ENCODE measurements at regions of chr1 and their contacts with region 1.

Region 1: GRCh38 chr1:17831619-17832018 is 76.5 kb downstream of the ACTL8 start:
- DNase-seq: peak in 1 of 2 experiments; percentile 73
- H3K4me3 ChIP-seq: no peak overlapping the region
- H3K4me1 ChIP-seq: no peaks in the 10 kb centered on the region
- H3K27me3 ChIP-seq: peaks cover 9% of the 10 kb centered on the region; the same call in 1 of the 2 replicates

Region 2: GRCh38 chr1:17606826-17607440 is 224.7 kb before region 1 on chr1:
- in situ Hi-C with region 1: no loop called
- DNase-seq: peak; percentile 25 to 85
- H3K4me3 ChIP-seq: no peak overlapping the region
- H3K4me1 ChIP-seq: no peaks in the 10 kb centered on the region
- H3K27me3 ChIP-seq: no peaks in the 10 kb centered on the region

Region 3: GRCh38 chr1:17661546-17662157 is 170.0 kb before region 1 on chr1:
- in situ Hi-C with region 1: loop called (anchors 10 kb)
- DNase-seq: peak; percentile 43 to 84
- H3K4me3 ChIP-seq: no peak overlapping the region
- H3K4me1 ChIP-seq: 0 out of 2 replicates have a peak, but pooled peaks cover 5% of the 10 kb centered on the region
- H3K27me3 ChIP-seq: no peaks in the 10 kb centered on the region

Region 4: DNA sequence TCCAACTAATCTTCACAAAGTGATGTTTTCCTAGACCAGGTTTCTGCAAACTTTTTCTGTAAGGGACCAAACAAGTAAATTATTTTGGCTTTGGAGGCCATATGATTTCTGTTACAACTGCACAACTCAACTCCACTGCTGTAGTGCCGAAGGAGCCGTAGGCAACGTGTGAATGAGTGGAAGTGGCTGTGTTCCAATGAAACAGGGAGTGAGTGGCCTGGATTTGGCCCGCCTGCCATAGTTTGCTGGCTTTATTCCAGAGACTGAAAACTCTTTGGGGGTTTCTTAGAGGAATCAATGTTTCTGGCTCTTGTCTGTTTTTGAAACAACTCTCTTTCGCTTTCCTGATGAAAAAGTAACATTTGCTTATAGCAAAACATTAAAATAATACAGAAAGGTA is 89.0 kb before region 1 on chr1:
- in situ Hi-C with region 1: no loop called
- DNase-seq: no peak
- H3K4me3 ChIP-seq: no peak overlapping the region
- H3K4me1 ChIP-seq: no peaks in the 10 kb centered on the region
- H3K27me3 ChIP-seq: peaks cover 13% of the 10 kb centered on the region

Region 5: GRCh38 chr1:18021235-18021634 is 189.6 kb after region 1 on chr1:
- in situ Hi-C with region 1: no loop called
- DNase-seq: no peak
- H3K4me3 ChIP-seq: no peak overlapping the region
- H3K4me1 ChIP-seq: no peaks in the 10 kb centered on the region
- H3K27me3 ChIP-seq: peaks cover 17% of the 10 kb centered on the region; the same call in 1 of the 2 replicates

Region 6: DNA sequence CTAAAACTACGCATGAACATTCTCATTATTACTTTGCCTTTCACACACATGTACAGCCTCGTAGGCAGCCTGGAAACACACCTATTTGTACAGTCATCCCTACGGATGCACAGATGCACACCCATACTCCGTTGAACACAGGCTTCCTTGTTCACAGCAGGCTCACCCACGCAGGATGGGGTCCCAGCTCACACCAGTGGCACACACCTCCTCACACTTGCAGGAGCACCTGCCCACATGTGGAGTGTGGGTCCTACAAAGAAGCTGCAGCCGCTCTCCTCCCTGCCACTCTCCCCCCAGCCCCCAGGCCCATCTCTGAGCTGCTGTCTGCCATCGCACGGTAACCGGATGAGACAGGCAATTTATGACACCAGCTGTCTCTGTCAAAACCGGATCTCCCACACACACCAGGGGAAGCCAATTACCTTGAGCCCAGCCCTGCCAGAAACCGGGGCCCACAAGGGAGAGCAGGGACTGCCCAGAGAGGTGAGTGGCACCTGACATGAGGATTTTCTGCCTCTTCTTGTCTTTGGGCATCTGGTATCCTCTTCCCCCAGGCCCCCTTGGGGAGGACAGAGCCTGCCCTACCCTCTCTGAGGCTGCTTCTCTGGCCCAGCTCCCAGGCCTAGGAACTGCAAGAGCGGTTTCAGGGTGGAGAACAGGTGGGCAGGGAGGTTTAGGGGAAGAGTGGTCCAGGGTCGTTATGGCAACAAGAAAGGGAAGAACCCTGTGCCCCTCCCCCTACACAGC is 451.4 kb after region 1 on chr1:
- in situ Hi-C with region 1: no loop called
- DNase-seq: no peak
- H3K4me3 ChIP-seq: no peak overlapping the region
- H3K4me1 ChIP-seq: no peaks in the 10 kb centered on the region
- H3K27me3 ChIP-seq: peaks cover 41% of the 10 kb centered on the region

Measured in HAP-1 (cell line).